Left ventricle myocardium inferior (tissue), 1 donor: ENCODE measurements at regions of chr7 and their contacts with region 1.

Region 1: DNA sequence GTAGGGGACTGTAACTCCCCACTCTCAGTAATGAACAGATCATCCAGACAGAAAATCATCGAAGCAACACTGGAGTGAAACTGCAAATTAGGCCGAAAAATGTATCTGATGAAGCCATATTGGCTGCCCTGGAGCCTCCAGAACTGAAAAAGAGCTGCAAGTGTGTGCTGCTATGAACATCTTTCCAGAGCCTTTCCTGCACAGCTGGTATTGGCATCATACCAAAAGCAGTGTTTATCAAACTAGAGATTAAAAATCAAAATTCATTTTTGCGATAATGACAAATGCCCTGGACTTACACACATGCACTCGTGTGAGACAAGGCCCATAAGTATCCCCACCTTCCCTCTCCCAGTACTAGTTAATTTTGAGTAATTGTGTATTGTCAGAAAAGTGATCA is 6.8 kb upstream of the CLDN12 start:
- DNase-seq: no peak
- H3K4me3 ChIP-seq: no peak overlapping the region
- H3K27ac ChIP-seq: no peak overlapping the region
- H3K4me1 ChIP-seq: no peaks in the 10 kb centered on the region
- H3K27me3 ChIP-seq: no peaks in the 10 kb centered on the region
- CTCF ChIP-seq: no peak

Region 2: DNA sequence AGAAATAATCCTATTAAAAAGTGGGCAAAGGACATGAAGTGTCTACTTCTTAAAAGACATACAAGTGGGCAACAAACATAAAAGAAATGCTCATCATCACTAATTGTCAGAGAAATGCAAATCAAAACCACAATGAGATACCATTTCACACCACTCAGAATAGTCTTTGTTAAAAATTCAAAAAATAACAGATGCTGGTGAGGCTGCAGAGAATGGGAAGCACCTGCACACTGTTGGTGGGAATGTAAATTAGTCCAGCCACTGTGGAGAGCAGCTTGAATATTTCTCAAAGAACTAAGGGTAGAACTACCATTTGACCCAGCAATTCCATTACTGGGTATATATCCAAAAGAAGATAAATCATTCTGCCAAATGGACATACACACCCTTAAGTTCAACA is 304.0 kb before region 1 on chr7:
- intact Hi-C with region 1: no loop called
- DNase-seq: no peak
- H3K4me3 ChIP-seq: no peak overlapping the region
- H3K27ac ChIP-seq: no peak overlapping the region
- H3K4me1 ChIP-seq: no peaks in the 10 kb centered on the region
- H3K27me3 ChIP-seq: no peaks in the 10 kb centered on the region
- CTCF ChIP-seq: no peak

Region 3: DNA sequence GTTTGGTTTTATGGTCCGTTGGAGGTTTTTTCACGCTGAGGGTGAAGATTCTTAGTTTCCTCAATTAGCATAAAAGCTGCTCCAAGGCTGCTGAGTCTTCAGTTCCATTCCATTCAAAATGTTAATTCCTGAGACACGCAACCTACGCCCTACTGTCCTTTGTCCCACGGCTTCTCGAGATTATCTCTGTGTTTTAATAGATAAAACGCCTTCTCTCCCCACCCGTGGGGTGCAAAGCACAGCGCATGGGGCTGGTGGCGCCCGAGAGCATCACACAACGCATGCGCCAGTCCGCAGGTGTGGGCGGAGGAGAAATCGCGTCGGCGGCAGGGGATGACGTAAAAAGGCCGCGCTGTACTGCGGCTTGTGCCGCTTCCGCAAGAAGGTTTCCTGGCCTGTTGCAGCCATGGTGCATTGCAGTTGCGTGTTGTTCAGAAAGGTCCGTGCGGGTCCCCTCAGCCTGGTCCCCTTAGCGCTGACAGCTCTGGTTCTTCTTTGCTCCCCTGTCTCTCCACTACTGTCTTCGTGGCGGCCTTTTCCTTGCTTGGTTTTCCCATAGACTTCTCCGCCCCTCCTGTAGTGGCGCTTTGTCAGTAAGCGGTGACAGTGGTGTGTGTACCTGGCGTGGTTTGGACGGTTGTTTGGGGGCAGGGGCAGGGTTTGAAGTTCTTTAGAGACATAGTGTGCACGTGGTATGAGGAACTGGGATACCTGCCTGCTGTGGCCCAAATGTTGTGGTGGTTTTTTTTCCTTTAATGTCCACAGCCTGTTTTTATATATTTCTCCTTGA is 49.9 kb before region 1 on chr7 and contains the start of gene GTPBP10:
- intact Hi-C with region 1: loop called (anchors 10 kb)
- DNase-seq: peak; percentile 93
- H3K4me3 ChIP-seq: peak within 1 kb of the TSS; percentile 86
- H3K27ac ChIP-seq: peak within 1 kb of the TSS; percentile 86
- H3K4me1 ChIP-seq: peaks cover 22% of the 10 kb centered on the region
- H3K27me3 ChIP-seq: no peaks in the 10 kb centered on the region
- CTCF ChIP-seq: peak; percentile 76
- total RNA-seq, gene GTPBP10: 24.2 TPM

Region 4: GRCh38 chr7:90764848-90765570 is 368.6 kb after region 1 on chr7:
- intact Hi-C with region 1: no loop called
- DNase-seq: no peak
- H3K4me3 ChIP-seq: no peak overlapping the region
- H3K27ac ChIP-seq: peak overlapping the region; percentile 76
- H3K4me1 ChIP-seq: peaks cover 55% of the 10 kb centered on the region
- H3K27me3 ChIP-seq: no peaks in the 10 kb centered on the region
- CTCF ChIP-seq: no peak

Region 5: DNA sequence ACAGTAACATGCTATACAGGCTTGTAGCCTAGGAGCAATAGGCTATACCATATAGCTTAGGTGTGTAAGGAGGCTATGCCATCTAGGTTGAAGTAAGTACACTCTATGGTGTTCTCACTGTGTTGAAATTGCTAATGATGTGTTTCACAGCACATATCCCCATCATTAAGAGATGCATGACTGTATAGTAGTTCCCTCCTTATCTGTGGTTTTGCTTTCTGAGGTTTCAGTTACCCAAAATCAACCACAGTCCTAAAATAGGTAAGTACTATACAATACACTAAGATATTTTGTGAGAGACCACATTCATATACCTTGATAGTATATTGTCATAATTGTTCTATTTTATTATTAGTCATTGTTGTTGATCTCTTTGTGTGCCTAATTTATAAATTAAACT is 880.5 kb after region 1 on chr7:
- intact Hi-C with region 1: no loop called
- DNase-seq: no peak
- H3K4me3 ChIP-seq: no peak overlapping the region
- H3K27ac ChIP-seq: no peak overlapping the region
- H3K4me1 ChIP-seq: no peaks in the 10 kb centered on the region
- H3K27me3 ChIP-seq: no peaks in the 10 kb centered on the region
- CTCF ChIP-seq: no peak